GM12878 (cell line): ENCODE measurements at regions of chr6 and their contacts with region 1.

Region 1: GRCh38 chr6:116287689-116288282 is 8.1 kb upstream of the TSPYL1 start:
- DNase-seq: no peak
- ATAC-seq: peak; percentile 84
- H3K4me3 ChIP-seq: no peak overlapping the region
- H3K27ac ChIP-seq: no peak overlapping the region
- H3K4me1 ChIP-seq: peaks cover 3% of the 10 kb centered on the region; the same call in 1 of the 2 replicates
- H3K27me3 ChIP-seq: no peaks in the 10 kb centered on the region
- CTCF ChIP-seq: peak; percentile 80 to 85 (median 81); a peak in 5 of 6 replicates
- EP300 ChIP-seq: no peak
- POLR2A ChIP-seq: no peak
- RAD21 ChIP-seq: peak; percentile 96

Region 2: GRCh38 chr6:115773741-115774140 is 514.0 kb before region 1 on chr6:
- CTCF ChIA-PET with region 1: no interaction called
- POLR2A ChIA-PET with region 1: no interaction called
- RAD21 ChIA-PET with region 1: no interaction called
- SMC1A ChIA-PET with region 1: no interaction called
- in situ Hi-C with region 1: no loop called
- intact Hi-C with region 1: no loop called
- DNase-seq: no peak
- ATAC-seq: no peak
- H3K4me3 ChIP-seq: no peak overlapping the region
- H3K27ac ChIP-seq: no peak overlapping the region
- H3K4me1 ChIP-seq: no peaks in the 10 kb centered on the region
- H3K27me3 ChIP-seq: no peaks in the 10 kb centered on the region
- CTCF ChIP-seq: no peak
- EP300 ChIP-seq: no peak
- POLR2A ChIP-seq: no peak
- RAD21 ChIP-seq: no peak

Region 3: DNA sequence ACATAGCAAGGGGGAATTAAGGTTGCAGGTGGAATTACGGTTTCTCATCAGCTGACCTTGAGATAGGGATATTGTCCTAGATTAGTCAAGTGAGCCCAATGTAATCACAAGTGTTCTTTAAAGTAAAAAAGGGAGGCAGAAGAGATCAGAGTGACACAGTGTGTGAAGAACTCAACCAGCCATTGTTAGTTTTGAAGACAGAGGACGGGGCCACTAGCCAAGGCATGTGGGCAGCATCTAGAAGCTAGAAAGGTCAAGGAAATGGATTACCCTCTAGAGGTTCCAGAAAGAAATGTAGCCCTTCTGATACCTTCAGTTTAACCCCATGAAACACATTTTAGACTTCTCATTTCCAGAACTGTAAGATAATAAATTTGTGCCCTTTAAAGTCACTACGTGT is 10.5 kb after region 1 on chr6:
- CTCF ChIA-PET with region 1: interaction called, 10 read pairs
- POLR2A ChIA-PET with region 1: no interaction called
- RAD21 ChIA-PET with region 1: no interaction called
- SMC1A ChIA-PET with region 1: interaction called, 5 read pairs
- in situ Hi-C with region 1: no loop called
- intact Hi-C with region 1: no loop called
- DNase-seq: no peak
- ATAC-seq: no peak
- H3K4me3 ChIP-seq: no peak overlapping the region
- H3K27ac ChIP-seq: no peak overlapping the region
- H3K4me1 ChIP-seq: peaks cover 6% of the 10 kb centered on the region; the same call in 1 of the 2 replicates
- H3K27me3 ChIP-seq: no peaks in the 10 kb centered on the region
- CTCF ChIP-seq: no peak
- EP300 ChIP-seq: no peak
- POLR2A ChIP-seq: no peak
- RAD21 ChIP-seq: no peak

Region 4: DNA sequence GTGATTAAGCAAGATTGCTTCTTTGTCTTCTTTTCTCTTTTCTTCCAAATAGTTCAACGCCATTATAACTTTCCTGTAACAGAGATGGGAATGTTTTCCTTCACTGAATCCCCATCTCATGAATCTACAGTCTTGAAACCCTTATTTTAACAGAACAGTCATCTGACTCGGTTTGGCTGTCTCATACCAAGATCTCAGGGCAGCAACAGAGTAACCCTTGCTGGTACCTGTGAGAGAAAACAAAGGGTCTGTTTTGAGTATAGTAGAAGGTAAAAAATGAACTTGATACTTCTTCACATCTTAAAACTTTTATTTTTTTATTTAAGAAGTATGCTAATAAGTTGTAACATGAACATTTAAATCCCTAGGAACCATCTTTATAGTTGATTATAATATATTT is 63.3 kb after region 1 on chr6:
- CTCF ChIA-PET with region 1: interaction called, 17 read pairs
- POLR2A ChIA-PET with region 1: no interaction called
- RAD21 ChIA-PET with region 1: no interaction called
- SMC1A ChIA-PET with region 1: interaction called, 6 read pairs
- in situ Hi-C with region 1: no loop called
- intact Hi-C with region 1: no loop called
- DNase-seq: no peak
- ATAC-seq: peak; percentile 62
- H3K4me3 ChIP-seq: no peak overlapping the region
- H3K27ac ChIP-seq: no peak overlapping the region
- H3K4me1 ChIP-seq: peaks cover 9% of the 10 kb centered on the region; the same call in 1 of the 2 replicates
- H3K27me3 ChIP-seq: no peaks in the 10 kb centered on the region
- CTCF ChIP-seq: no peak
- EP300 ChIP-seq: no peak
- POLR2A ChIP-seq: no peak
- RAD21 ChIP-seq: no peak

Region 5: DNA sequence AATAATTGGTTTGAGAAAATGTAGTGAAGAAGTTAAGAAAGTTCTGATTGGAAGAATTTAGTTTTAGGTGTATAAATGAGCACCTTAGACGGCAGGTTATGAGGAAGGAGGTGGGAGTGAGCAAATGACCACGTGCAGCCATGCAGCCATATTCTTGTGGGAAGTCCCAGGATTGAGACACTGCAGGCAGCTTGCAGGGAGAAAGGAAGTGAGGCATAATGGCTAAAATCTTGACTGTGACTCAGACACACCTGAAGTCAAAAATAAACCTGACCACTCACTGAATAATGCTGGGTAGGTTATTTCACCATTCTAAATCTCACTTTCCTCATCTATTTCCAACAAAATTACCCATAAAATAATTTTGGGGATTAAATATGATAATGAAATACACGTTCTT is 99.6 kb after region 1 on chr6:
- CTCF ChIA-PET with region 1: interaction called, 36 read pairs
- POLR2A ChIA-PET with region 1: no interaction called
- RAD21 ChIA-PET with region 1: interaction called, 11 read pairs
- SMC1A ChIA-PET with region 1: interaction called, 36 read pairs
- in situ Hi-C with region 1: no loop called
- intact Hi-C with region 1: no loop called
- DNase-seq: no peak
- ATAC-seq: peak; percentile 77
- H3K4me3 ChIP-seq: peak overlapping the region; percentile 59
- H3K27ac ChIP-seq: peak overlapping the region; percentile 79
- H3K4me1 ChIP-seq: peaks cover 59% of the 10 kb centered on the region
- H3K27me3 ChIP-seq: no peaks in the 10 kb centered on the region
- CTCF ChIP-seq: no peak
- EP300 ChIP-seq: peak in 1 of 2 experiments; percentile 64; a peak in 1 of 4 replicates
- POLR2A ChIP-seq: 0 out of 2 replicates have a peak, but pooled peaks have one; percentile 28
- RAD21 ChIP-seq: no peak

Region 6: DNA sequence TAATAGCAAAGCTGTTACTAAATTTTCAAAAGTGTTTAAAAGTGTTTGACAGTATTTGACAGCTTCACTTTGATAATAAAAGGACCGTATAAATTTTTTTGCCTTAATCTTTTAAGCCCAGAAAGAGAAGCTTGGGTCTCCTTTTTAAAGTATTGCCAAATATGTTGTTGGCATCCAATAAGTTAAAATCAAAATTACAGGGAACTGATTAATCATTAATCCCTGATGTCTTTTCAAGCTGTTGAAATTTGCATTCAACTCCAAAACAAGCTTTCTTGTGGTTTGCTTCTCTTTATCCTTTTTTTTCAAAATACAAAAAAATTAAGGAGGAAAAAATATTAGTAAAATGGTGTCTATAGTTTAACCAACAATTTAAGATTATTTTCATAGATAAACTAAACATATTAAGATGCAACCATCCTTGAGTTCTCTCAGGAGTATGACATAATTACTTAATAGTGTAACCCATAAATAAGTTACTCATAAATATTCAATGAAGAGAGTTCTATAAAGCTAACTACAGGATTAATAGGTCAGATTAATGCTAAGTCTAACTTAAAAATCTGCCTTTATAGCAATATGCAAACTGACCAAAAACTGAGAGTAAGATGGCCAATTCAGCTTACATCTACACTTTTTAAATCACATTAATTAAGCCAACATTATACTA is 146.4 kb after region 1 on chr6:
- CTCF ChIA-PET with region 1: interaction called, 20 read pairs
- POLR2A ChIA-PET with region 1: no interaction called
- RAD21 ChIA-PET with region 1: interaction called, 5 read pairs
- SMC1A ChIA-PET with region 1: interaction called, 12 read pairs
- in situ Hi-C with region 1: no loop called
- intact Hi-C with region 1: no loop called
- DNase-seq: no peak
- ATAC-seq: no peak
- H3K4me3 ChIP-seq: no peak overlapping the region
- H3K27ac ChIP-seq: no peak overlapping the region
- H3K4me1 ChIP-seq: no peaks in the 10 kb centered on the region
- H3K27me3 ChIP-seq: no peaks in the 10 kb centered on the region
- CTCF ChIP-seq: no peak
- EP300 ChIP-seq: no peak
- POLR2A ChIP-seq: no peak
- RAD21 ChIP-seq: no peak

Region 7: DNA sequence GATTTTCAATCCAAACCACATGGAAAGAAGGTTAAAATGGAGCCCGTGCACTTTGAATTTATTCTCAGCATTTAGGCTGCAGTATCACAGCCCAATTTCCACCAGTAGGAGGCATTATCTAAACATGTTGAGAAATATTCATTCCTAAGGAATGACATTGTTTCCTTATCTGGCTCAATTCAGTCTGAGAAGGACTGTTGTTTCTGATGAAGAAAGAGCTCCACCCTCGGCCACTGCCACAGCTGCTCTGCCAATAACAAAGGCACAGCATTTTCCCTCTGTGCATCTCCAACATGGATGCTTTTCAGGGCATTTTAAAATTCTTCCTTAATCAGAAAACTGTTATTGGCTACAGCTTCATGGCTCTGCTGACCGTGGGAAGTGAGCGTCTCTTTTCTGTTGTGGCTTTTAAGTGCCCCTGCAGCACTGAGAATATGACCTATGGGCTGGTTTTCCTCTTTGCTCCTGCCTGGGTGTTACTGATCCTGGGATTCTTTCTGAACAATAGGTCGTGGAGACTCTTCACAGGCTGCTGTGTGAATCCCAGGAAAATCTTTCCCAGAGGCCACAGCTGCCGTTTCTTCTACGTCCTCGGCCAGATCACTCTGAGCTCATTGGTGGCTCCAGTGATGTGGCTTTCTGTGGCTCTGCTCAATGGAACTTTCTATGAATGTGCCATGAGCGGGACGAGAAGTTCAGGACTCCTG is 223.8 kb after region 1 on chr6 and contains the start of gene CALHM5:
- CTCF ChIA-PET with region 1: interaction called, 20 read pairs
- POLR2A ChIA-PET with region 1: no interaction called
- RAD21 ChIA-PET with region 1: interaction called, 5 read pairs
- SMC1A ChIA-PET with region 1: interaction called, 4 read pairs
- in situ Hi-C with region 1: no loop called
- intact Hi-C with region 1: no loop called
- DNase-seq: no peak
- ATAC-seq: no peak
- H3K4me3 ChIP-seq: no peak within 1 kb of the TSS
- H3K27ac ChIP-seq: no peak within 1 kb of the TSS
- H3K4me1 ChIP-seq: peaks cover 9% of the 10 kb centered on the region
- H3K27me3 ChIP-seq: no peaks in the 10 kb centered on the region; a peak in 1 of 4 replicates
- CTCF ChIP-seq: peak in 1 of 3 experiments; percentile 24; a peak in 1 of 6 replicates
- EP300 ChIP-seq: no peak
- POLR2A ChIP-seq: no peak
- RAD21 ChIP-seq: 0 out of 2 replicates have a peak, but pooled peaks have one; percentile 2
- polyA plus RNA-seq, gene CALHM5: not detected

Region 8: GRCh38 chr6:116542426-116542825 is 254.6 kb after region 1 on chr6:
- CTCF ChIA-PET with region 1: interaction called, 18 read pairs
- POLR2A ChIA-PET with region 1: no interaction called
- RAD21 ChIA-PET with region 1: interaction called, 7 read pairs
- SMC1A ChIA-PET with region 1: interaction called, 8 read pairs
- in situ Hi-C with region 1: no loop called
- intact Hi-C with region 1: no loop called
- DNase-seq: no peak
- ATAC-seq: no peak
- H3K4me3 ChIP-seq: no peak overlapping the region
- H3K27ac ChIP-seq: no peak overlapping the region
- H3K4me1 ChIP-seq: no peaks in the 10 kb centered on the region
- H3K27me3 ChIP-seq: peaks cover 0 to 8% of the 10 kb centered on the region in 2 experiments; a peak in 1 of 4 replicates
- CTCF ChIP-seq: no peak
- EP300 ChIP-seq: no peak
- POLR2A ChIP-seq: no peak
- RAD21 ChIP-seq: no peak